IMR-90 (cell line): ENCODE measurements at regions of chr4 and their contacts with region 1.

Region 1: DNA sequence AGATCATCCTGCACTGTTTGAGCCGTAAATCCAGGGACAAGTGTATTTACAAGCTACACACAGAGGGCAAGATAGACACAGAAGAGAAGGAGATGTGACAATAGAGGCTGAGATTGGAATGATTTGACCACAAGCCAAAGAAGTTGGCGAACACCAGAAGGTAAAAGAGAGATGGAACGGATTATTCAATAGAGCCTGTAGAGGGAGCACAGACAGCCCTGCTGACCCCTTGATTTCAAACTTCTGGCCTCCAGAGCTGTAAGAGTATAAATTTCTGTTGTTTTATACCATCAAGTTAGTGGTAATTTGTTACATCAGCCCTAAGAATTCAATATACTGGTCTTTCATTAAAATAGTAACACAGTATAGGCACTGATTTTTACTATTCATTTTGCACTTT is 447.8 kb downstream of the FAT4 start:
- DNase-seq: no peak
- ATAC-seq: no peak
- H3K4me3 ChIP-seq: no peak overlapping the region
- H3K27ac ChIP-seq: no peak overlapping the region
- H3K4me1 ChIP-seq: no peaks in the 10 kb centered on the region
- H3K27me3 ChIP-seq: no peaks in the 10 kb centered on the region
- CTCF ChIP-seq: no peak
- POLR2A ChIP-seq: no peak
- RAD21 ChIP-seq: no peak

Region 2: GRCh38 chr4:126495163-126495752 is 732.7 kb after region 1 on chr4:
- CTCF ChIA-PET with region 1: no interaction called
- POLR2A ChIA-PET with region 1: no interaction called
- dilution Hi-C with region 1: no loop called
- in situ Hi-C with region 1: no loop called
- intact Hi-C with region 1: loop called (anchors 10 kb)
- DNase-seq: no peak
- ATAC-seq: no peak
- H3K4me3 ChIP-seq: no peak overlapping the region
- H3K27ac ChIP-seq: no peak overlapping the region
- H3K4me1 ChIP-seq: no peaks in the 10 kb centered on the region
- H3K27me3 ChIP-seq: no peaks in the 10 kb centered on the region
- CTCF ChIP-seq: no peak
- POLR2A ChIP-seq: no peak
- RAD21 ChIP-seq: no peak